Posterior cingulate gyrus (tissue), 11 donors: ENCODE measurements at regions of chr12 and their contacts with region 1.

Region 1: DNA sequence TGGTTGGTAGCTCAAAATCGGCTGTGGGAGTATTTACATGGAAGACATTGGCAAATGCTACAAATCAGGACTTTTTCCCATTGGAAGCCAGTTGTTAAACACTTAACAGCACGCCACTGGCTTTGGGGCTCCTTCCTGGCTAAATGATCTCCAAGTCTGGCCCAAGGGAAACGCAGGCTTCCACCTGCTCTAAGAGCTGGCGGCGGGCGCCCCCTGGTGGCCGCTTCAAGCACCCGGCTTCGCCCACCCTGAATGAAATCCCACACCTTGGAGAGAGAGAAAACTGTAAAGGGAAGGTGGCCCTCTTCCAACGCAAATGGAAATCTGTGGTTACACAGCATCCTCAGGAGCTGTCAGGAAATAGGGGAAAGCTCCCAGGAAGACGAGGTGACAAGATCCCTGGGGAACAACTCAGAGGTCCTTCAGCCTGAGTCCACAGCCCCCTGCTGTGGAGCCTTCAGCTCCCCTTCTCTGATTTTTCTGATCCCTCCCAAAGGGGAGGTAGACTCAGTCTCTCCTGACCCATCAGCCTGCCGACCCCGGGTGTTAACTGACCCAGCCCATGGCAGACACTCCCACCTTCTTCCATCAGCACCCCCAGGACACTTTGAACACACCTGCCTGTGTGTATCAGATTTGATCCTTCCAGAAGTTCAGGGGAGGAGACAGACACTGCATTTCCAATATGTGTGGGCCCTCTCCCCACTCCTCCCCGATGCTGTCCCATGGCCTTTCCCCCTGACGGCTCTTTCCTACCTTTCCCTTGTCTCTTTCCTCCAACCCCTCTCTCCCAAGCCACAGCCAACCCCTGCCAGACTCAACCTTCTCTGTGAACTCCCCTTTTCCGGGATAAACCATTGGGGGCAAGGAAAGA is 15.4 kb downstream of the SELPLG start:
- DNase-seq: peak; percentile 61 to 96 (median 81)

Region 2: DNA sequence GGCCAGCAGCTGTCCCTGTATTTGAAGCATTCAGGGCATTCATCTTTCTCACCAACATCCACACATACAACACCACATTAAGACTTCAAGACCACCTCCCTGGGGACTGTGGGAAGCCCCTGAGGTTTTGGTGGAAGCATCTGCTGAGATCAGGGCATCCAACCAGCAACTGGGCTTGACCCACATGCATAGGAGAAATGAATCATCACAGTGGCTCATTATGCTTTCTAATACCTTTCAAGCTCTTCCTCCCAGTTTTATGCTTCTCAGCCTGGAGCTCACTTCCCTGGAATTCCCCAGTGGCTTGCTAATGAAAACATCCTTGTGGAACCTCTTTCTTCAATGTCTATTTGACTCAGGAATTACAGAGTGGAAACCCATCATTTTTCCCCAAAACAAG is 257.8 kb before region 1 on chr12:
- intact Hi-C with region 1: no loop called
- DNase-seq: no peak

Region 3: DNA sequence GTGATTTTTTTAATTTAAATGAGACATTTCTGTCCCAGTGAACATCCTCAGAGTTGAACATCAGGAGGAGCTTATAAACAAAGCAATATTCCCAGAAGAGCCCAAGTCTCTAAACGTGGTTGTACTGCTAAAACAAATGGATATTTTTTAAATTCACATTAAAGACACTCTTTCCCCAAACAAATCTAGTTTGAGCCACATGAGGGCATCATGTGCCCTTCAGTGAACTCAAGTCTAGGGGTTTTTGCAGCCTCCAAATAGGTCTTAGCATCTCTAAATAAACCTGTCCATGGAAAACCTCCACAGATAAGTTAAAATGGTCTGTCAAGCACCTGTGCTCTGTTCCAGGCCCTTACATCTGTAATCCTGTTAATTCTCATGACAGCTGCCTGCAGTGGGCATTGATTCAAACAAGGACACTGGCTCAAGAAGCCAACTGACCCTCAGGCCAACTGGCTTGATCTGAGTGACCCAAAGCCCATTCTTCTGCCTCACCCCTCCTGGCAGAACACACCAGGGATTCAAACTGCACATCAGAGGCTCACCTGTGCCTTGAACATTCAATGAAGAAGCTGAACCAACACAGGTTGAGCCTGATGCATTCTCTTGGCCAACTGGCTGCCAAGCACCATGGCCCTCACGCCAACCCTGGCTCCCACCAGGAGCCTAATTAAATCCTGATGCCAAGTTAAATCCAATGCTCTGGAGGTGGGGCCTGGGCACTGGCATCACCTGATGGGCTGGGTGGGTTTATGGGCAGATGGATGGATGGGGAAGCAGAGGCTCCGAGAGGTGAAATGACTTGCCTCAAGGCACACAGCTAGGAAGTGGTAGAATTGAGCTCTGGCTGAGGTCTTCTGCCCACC is 47.3 kb before region 1 on chr12:
- intact Hi-C with region 1: loop called (anchors 2 kb)
- DNase-seq: no peak